ENCODE measurements at regions of chr2 and their contacts with region 1.

Region 1: DNA sequence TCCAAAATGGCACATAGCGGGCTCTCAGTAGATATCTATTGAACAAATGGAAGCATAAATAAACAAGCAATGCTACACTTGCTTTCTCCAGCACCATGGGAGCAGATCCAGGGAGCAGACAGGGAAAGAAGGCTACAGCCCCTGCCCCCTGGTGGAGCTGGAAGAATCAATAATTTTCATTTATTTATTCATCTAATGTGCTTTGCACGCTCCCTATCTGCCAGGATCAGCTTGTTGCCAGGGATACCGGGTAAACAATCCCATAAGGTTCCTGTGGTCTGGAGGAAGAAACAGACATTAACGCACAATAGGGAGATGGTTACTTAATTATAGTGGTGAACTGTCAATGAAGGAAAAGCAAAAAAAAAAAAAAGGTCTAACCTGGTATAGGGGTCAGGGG is 40.1 kb upstream of the CLASP1 start:
- DNase-seq: peak; percentile 77
- H3K4me3 ChIP-seq: no peak overlapping the region
- H3K27ac ChIP-seq: no peak overlapping the region
- H3K4me1 ChIP-seq: no peaks in the 10 kb centered on the region
- H3K27me3 ChIP-seq: no peaks in the 10 kb centered on the region
- CTCF ChIP-seq: peak; percentile 37 to 50
- POLR2A ChIP-seq: no peak

Region 2: GRCh38 chr2:121596221-121597080 is 92.9 kb before region 1 on chr2:
- CTCF ChIA-PET with region 1: interaction called, 10 read pairs
- POLR2A ChIA-PET with region 1: no interaction called
- dilution Hi-C with region 1: no loop called
- intact Hi-C with region 1: loop called (anchors 1 kb)
- DNase-seq: peak; percentile 81
- H3K4me3 ChIP-seq: peak overlapping the region in 2 of 3 experiments; percentile 3 to 62
- H3K27ac ChIP-seq: peak overlapping the region; percentile 56
- H3K4me1 ChIP-seq: peaks cover 14% of the 10 kb centered on the region
- H3K27me3 ChIP-seq: no peaks in the 10 kb centered on the region
- CTCF ChIP-seq: peak; percentile 29 to 35
- POLR2A ChIP-seq: no peak

Region 3: DNA sequence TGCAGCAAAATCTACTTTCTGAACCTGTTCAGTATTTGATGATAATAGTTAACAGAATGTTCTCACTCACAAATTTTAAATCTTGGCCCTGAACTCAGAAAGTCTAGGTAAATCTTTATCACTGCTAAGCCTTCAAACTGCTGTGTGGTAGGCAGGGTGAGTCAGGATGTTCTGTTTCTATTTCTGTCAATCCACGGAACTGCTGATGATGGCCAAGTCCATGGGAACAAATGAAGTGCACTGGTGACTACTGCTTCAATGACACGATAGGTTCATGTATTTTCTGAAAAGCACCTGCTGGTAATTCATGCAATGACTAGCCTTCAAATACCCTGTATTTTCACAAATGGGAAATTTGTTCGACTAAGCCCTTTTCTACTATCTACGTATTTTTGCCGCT is 33.1 kb after region 1 on chr2:
- CTCF ChIA-PET with region 1: no interaction called
- POLR2A ChIA-PET with region 1: no interaction called
- dilution Hi-C with region 1: no loop called
- intact Hi-C with region 1: loop called (anchors 2 kb)
- DNase-seq: no peak
- H3K4me3 ChIP-seq: no peak overlapping the region
- H3K27ac ChIP-seq: no peak overlapping the region
- H3K4me1 ChIP-seq: no peaks in the 10 kb centered on the region
- H3K27me3 ChIP-seq: no peaks in the 10 kb centered on the region
- CTCF ChIP-seq: no peak
- POLR2A ChIP-seq: no peak

Measured in endothelial cell of umbilical vein (primary cell).